Activated T-helper 1 cell treated with anti-CD3 and anti-CD28 coated beads, Interleukin-12 subunit alpha, Interleukin-12 subunit beta, Interleukin-2, Interleukin-4 antibody, amounts not matched to agents 30 ng/mL and 10 ng/mL and 1 ng/mL, durations not matched to agents 14 hours and 24 hours and 36 hours (primary cell): ENCODE measurements at regions of chr1 and their contacts with region 1.

Region 1: DNA sequence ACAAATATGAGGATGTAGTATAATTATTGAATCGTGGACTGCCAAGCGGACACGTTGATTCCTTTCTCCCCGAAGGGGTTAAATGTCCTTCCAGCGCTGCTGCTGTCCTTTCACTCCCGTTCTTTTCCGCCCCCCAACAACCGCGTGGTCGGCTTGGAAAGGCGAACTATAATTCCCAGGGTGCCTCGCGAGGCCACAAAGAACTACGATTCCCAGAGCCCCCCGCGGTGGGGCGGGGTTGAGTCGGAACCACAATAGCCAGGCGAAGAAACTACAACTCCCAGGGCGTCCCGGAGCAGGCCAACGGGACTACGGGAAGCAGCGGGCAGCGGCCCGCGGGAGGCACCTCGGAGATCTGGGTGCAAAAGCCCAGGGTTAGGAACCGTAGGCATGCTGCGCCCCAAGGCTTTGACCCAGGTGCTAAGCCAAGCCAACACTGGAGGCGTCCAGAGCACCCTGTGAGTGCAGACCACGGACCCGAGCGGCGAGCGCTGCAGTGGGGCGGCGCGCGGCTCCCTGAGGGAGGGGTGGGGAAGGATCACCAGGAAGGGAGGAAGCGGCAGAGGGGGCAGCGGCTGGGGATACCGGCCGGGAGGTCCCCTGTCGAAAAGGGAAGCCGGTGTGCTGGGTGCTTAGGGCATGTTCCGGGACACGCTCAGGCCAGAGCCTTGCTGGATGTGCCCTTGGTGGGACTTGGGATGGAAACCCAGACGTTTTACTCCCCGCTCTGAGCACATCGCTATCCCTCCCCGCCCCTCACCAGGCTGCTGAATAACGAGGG is at the start of gene LAMTOR2:
- DNase-seq: peak; percentile 95
- H3K4me3 Mint-ChIP-seq: peak within 1 kb of the TSS; percentile 96
- H3K27ac Mint-ChIP-seq: peak within 1 kb of the TSS; percentile 94
- H3K4me1 Mint-ChIP-seq: peaks cover 33% of the 10 kb centered on the region
- H3K27me3 Mint-ChIP-seq: no peaks in the 10 kb centered on the region
- total RNA-seq, gene LAMTOR2: 66.8 and 67.1 TPM in 2 replicates

Region 2: GRCh38 chr1:155688324-155689080 is 366.2 kb before region 1 on chr1 and contains the start of gene YY1AP1:
- intact Hi-C with region 1: loop called (anchors 1 kb)
- DNase-seq: peak; percentile 88
- H3K4me3 Mint-ChIP-seq: peak within 1 kb of the TSS; percentile 95
- H3K27ac Mint-ChIP-seq: peak within 1 kb of the TSS; percentile 96
- H3K4me1 Mint-ChIP-seq: peaks cover 62% of the 10 kb centered on the region
- H3K27me3 Mint-ChIP-seq: peaks cover 3% of the 10 kb centered on the region
- total RNA-seq, gene YY1AP1: 62.2 and 64.4 TPM in 2 replicates

Region 3: GRCh38 chr1:155801149-155801548 is 253.5 kb before region 1 on chr1:
- intact Hi-C with region 1: no loop called
- DNase-seq: no peak
- H3K4me3 Mint-ChIP-seq: no peak overlapping the region
- H3K27ac Mint-ChIP-seq: peak overlapping the region; percentile 15
- H3K4me1 Mint-ChIP-seq: no peaks in the 10 kb centered on the region
- H3K27me3 Mint-ChIP-seq: no peaks in the 10 kb centered on the region

Region 4: GRCh38 chr1:155978325-155978972 is 76.2 kb before region 1 on chr1 and contains the start of gene ARHGEF2:
- intact Hi-C with region 1: loop called (anchors 1 kb)
- DNase-seq: peak; percentile 71
- H3K4me3 Mint-ChIP-seq: peak within 1 kb of the TSS; percentile 92
- H3K27ac Mint-ChIP-seq: peak within 1 kb of the TSS; percentile 95
- H3K4me1 Mint-ChIP-seq: peaks cover 78% of the 10 kb centered on the region
- H3K27me3 Mint-ChIP-seq: no peaks in the 10 kb centered on the region
- total RNA-seq, gene ARHGEF2: 221 and 222 TPM in 2 replicates

Region 5: GRCh38 chr1:156082309-156083091 is 27.8 kb after region 1 on chr1 and contains the start of gene MEX3A:
- intact Hi-C with region 1: loop called (anchors 1 kb)
- DNase-seq: peak; percentile 42
- H3K4me3 Mint-ChIP-seq: peak within 1 kb of the TSS; percentile 82
- H3K27ac Mint-ChIP-seq: no peak within 1 kb of the TSS
- H3K4me1 Mint-ChIP-seq: peaks cover 5% of the 10 kb centered on the region
- H3K27me3 Mint-ChIP-seq: peaks cover 76% of the 10 kb centered on the region
- total RNA-seq, gene MEX3A: 0.27 and 0.41 TPM in 2 replicates

Region 6: GRCh38 chr1:156129706-156130581 is 75.3 kb after region 1 on chr1:
- intact Hi-C with region 1: loop called (anchors 1 kb)
- DNase-seq: peak; percentile 69
- H3K4me3 Mint-ChIP-seq: no peak overlapping the region
- H3K27ac Mint-ChIP-seq: peak overlapping the region; percentile 35
- H3K4me1 Mint-ChIP-seq: peaks cover 50% of the 10 kb centered on the region
- H3K27me3 Mint-ChIP-seq: peaks cover 2% of the 10 kb centered on the region

Region 7: DNA sequence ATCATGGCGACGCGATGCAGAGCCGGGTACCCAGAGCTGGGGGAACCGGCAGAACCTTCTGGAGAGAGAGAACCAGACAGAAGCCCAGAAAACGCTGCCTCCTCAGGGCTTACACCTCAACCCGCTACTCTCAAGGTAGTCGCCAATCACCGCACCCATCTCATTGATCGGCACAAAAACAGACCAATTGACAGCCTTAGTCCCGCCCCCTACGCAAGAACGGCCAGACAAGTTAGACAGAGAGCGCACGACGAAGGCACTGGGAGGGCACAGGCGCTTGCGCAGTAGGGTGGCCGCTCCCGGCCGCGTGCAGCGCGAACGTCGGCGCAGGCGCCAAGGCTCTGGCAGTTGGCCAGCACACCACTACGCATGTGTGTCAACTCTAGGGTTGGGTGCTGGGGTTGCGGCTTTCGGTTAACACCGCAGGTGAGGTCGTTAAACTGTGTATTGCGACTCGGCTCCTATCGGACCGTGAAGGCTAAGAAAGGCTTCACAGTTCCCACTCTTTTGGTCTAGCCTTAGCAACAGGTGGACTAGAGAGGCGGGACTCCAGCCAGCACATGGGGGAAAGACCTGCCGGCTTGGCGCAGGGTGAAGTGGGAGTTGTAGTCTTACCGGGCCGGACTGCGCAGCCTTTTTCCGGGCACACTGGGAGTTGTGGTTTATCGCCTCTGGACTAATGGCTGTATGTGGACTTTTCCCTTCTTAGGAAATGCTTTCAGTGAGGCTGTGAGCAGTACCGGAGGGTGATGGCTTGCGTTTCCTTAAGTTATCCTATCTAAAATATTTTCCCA is 283.7 kb after region 1 on chr1 and contains the starts of genes CCT3 and TSACC:
- intact Hi-C with region 1: loop called (anchors 1 kb)
- DNase-seq: peak; percentile 99
- H3K4me3 Mint-ChIP-seq: peak within 1 kb of the TSS; percentile 98
- H3K27ac Mint-ChIP-seq: peak within 1 kb of the TSS; percentile 95
- H3K4me1 Mint-ChIP-seq: peaks cover 41% of the 10 kb centered on the region
- H3K27me3 Mint-ChIP-seq: peaks cover 5% of the 10 kb centered on the region
- total RNA-seq, gene CCT3: 567 and 570 TPM in 2 replicates
- total RNA-seq, gene TSACC: 0.81 TPM in 1 of 2 replicates, not detected in the other